CD4-positive, alpha-beta memory T cell (primary cell): ENCODE measurements at regions of chr3 and their contacts with region 1.

Region 1: GRCh38 chr3:12782172-12782815 is 14.2 kb upstream of the CAND2 start:
- DNase-seq: no peak
- H3K4me3 ChIP-seq: no peak overlapping the region
- H3K4me3 Mint-ChIP-seq: no peak overlapping the region
- H3K27ac ChIP-seq: no peak overlapping the region
- H3K27ac Mint-ChIP-seq: no peak overlapping the region
- H3K4me1 ChIP-seq: no peaks in the 10 kb centered on the region
- H3K4me1 Mint-ChIP-seq: no peaks in the 10 kb centered on the region
- H3K27me3 ChIP-seq: no peaks in the 10 kb centered on the region
- H3K27me3 Mint-ChIP-seq: peaks cover 11 to 17% of the 10 kb centered on the region in 2 donors

Region 2: DNA sequence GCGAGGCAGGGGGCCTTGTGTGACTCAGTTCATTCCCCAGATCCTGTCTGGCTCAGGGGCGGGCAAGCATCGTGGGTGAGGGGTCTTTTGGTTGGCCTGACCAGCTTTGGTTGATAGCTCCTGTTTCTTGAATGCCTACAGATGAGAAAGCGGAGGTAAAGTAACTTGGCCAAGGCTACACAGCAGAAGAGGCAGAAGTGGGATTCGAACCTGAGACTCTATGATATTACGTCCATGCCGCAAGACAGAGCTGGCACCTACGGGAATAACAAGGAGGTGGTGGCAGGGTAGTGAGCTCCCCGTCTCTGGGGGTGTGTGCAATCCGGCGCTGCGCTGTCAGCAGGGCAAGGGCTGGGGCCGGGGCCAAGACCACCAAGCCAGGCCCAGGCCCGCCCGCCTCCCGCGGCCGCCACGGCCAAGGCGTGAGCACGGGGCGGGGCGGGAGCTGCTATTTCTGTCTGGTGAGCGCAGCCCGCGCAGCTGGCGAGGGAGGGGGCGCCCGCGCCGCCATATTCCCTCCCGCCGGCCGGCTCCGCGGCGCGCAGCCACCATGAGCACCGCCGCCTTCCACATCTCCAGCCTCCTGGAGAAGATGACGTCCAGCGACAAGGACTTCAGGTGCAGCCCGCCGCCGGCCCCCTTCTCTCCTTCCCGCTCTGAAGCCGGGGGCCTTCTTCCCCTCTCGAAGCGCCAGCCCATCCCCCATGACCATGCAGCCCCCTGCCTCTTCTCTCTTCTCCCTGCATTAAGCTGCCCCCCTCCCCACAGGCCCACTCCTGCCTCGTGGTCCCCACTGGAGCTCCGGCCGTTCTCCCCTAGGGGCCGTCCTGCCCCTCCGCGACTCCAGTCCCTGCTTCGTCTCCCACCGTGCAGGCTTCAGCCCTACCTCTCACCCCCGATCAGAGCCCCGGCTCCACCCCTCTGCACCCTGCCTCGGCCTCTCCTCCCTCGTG is 14.2 kb after region 1 on chr3 and contains the start of gene CAND2:
- CTCF ChIA-PET with region 1: interaction called, 16 read pairs
- POLR2A ChIA-PET with region 1: no interaction called
- intact Hi-C with region 1: no loop called
- DNase-seq: peak; percentile 25 to 52 (median 37)
- H3K4me3 ChIP-seq: peak within 1 kb of the TSS; percentile 43 to 52
- H3K4me3 Mint-ChIP-seq: peak within 1 kb of the TSS; percentile 86 to 90 (median 87)
- H3K27ac ChIP-seq: peak within 1 kb of the TSS; percentile 38
- H3K27ac Mint-ChIP-seq: peak within 1 kb of the TSS in 6 of 7 donors; percentile 60 to 84 (median 76)
- H3K4me1 ChIP-seq: peaks cover 9% of the 10 kb centered on the region
- H3K4me1 Mint-ChIP-seq: peaks cover 2 to 22% (median 11%) of the 10 kb centered on the region in 4 donors
- H3K27me3 ChIP-seq: no peaks in the 10 kb centered on the region
- H3K27me3 Mint-ChIP-seq: peaks cover 0 to 6% of the 10 kb centered on the region in 2 donors
- total RNA-seq, gene CAND2: 1.9 to 2.2 TPM